Left cardiac atrium (tissue), 4 donors: ENCODE measurements at regions of chr3 and their contacts with region 1.

Region 1: DNA sequence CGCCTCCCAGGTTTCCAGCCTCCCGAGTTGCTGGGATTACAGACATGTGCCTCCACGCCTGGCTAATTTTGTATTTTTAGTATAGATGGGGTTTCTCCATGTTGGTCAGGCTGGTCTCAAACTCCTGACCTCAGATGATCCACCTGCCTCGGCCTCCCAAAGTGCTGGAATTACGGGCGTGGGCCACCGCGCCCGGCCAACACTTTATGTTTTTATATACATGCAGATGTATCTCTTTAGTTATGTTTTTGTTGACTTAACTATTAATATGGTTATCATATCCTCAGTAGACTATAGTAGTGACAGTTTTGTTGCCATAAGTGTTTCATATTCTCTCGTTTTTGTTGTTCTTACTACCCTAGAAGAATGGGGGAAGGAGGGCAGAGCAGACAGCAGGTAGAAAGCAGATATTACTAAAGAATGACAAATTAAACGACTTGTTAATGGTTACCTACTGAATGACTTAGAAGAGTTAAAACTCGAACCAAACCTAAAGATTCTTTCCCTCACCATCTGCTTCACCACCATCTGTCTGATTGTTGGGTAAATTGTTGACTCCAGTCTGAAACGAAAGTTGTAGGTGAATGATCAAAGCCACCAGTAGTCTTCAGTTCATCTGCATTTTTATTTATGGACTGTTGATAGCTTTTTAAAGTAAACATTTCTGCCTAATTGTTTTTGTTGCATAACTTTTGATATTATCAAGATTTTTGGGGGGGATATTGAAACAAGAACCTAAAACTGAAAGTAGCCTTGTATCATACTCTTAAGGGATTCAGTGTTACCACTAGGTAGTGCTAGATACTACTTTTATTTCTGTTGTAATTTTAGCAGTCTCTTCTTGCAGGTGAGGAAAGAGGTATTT is 89.3 kb downstream of the RASA2 start:
- DNase-seq: no peak
- ATAC-seq: peak; percentile 57 to 63

Region 2: GRCh38 chr3:141881702-141882101 is 305.6 kb after region 1 on chr3:
- intact Hi-C with region 1: loop called in 1 of 2 experiments (anchors 10 kb)
- DNase-seq: no peak
- ATAC-seq: no peak

Region 3: GRCh38 chr3:141913150-141913811 is 337.2 kb after region 1 on chr3:
- intact Hi-C with region 1: loop called in 1 of 2 experiments (anchors 10 kb)
- DNase-seq: no peak
- ATAC-seq: peak; percentile 50 to 69